Right ventricle myocardium superior (tissue), 1 donor: ENCODE measurements at regions of chr5 and their contacts with region 1.

Region 1: DNA sequence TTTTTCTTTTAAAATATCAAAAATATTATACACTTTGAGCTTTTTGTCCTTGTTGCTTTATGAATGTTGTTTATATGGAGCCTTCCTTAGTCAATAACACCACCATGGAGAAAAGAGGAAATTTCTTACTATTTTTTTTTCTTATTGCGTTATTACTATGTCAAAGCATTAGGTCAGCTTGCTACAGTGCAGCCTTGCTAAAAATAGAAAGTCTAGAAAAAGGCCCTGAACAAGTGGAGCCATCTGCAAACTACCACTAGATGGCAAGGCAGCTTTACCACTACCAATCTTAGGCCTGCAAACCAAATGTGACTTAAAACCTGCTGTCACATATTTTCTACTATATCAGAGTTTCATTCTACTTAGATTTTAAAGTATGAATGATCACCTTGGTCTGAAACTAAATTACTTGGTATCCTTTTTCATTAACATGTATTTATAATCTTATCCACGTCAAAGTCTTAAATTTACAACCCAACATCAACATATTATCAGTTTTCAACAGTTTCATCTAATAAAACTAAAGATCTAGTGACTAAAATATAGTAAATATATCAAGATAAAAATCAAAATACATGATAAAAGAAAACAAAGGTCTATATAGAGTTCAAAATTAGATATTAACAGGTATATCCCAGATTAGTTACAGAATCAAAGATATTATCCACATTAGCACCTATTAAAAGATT is 113.1 kb upstream of the ACOT12 start:
- DNase-seq: no peak
- ATAC-seq: peak; percentile 99

Region 2: DNA sequence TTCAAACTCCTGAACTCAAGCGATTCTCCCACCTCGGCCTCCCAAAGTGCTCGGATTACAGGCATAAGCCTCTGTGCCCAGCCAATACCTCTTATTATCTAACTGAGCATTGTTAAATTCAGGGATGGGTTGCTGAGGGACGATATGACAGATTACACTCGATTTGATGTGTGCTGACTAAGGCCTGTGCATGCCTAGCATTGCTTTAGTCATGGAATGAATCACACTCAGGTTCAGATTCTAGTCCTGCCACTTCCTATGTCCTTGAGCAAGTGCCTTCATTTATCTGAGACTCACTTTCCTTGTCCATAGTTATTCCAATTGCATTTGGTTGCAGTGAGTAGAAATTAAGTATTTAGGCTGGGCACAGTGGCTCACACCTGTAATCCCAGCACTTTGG is 1452.4 kb before region 1 on chr5:
- intact Hi-C with region 1: no loop called
- DNase-seq: no peak
- ATAC-seq: no peak

Region 3: DNA sequence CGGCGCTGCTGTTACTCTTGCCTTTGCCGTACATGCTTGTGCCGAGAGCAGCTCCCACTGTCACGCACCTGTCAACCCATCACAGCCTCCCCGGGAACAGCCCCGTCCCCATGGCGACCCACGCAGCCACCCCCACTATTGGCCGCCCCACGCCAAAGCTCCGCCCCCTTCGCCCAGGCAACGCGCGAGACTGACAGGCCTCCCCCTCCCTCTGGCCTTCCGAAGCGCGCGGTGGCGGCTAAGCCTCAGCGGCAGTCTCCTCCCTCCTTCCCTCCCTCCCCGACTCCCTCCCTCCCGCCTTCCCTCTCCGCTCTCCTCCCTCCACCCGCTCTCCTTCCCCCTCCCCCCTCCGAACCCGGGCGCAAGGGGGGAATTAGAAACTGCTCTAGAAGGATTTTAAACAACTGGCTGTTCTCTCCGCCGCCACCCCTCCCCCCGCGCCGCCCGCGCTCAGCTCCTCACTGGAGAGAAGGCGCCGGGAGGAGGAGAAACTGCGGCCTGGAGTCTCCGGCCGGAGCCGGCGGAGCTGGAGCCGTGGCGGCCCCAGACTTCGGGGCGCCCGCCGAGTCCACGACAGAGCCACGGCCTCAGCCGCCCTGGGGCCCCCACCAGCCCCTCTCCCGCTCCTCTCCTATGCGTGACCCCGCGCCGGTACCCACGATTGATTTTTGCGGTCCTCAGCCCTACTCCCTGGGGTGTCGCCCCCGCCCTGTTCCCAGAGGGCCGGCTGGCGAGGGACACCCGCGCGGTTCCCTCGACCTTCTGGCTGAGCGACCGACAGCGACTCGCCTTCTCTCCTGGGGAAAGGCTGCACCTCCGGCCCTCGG is 244.2 kb after region 1 on chr5 and contains the start of gene SSBP2:
- intact Hi-C with region 1: loop called (anchors 5 kb)
- DNase-seq: peak; percentile 100
- ATAC-seq: peak; percentile 95
- total RNA-seq, gene SSBP2: 46.9 TPM

Region 4: GRCh38 chr5:81856948-81857928 is 350.2 kb after region 1 on chr5:
- intact Hi-C with region 1: loop called (anchors 5 kb)
- DNase-seq: peak; percentile 90
- ATAC-seq: peak; percentile 94

Region 5: GRCh38 chr5:82165740-82166530 is 658.9 kb after region 1 on chr5:
- intact Hi-C with region 1: loop called (anchors 5 kb)
- DNase-seq: peak; percentile 63
- ATAC-seq: peak; percentile 100